CD8-positive, alpha-beta memory T cell (primary cell): ENCODE measurements at regions of chr17 and their contacts with region 1.

Region 1: GRCh38 chr17:63697341-63698286 is 2.3 kb downstream of the LIMD2 start:
- DNase-seq: peak; percentile 76 to 92 (median 84)
- H3K4me3 ChIP-seq: peak overlapping the region; percentile 95
- H3K4me3 Mint-ChIP-seq: peak overlapping the region; percentile 98 to 100 (median 98)
- H3K27ac ChIP-seq: peak overlapping the region; percentile 74
- H3K27ac Mint-ChIP-seq: peak overlapping the region; percentile 94 to 99 (median 98)
- H3K4me1 ChIP-seq: peaks cover 50% of the 10 kb centered on the region
- H3K4me1 Mint-ChIP-seq: peaks cover 61 to 71% (median 62%) of the 10 kb centered on the region in 3 donors
- H3K27me3 ChIP-seq: no peaks in the 10 kb centered on the region
- H3K27me3 Mint-ChIP-seq: peaks cover 0 to 3% of the 10 kb centered on the region in 2 donors

Region 2: GRCh38 chr17:63621766-63622519 is 75.7 kb before region 1 on chr17 and contains the start of gene MAP3K3:
- CTCF ChIA-PET with region 1: interaction called, 4 read pairs
- POLR2A ChIA-PET with region 1: interaction called, 20 read pairs
- DNase-seq: peak; percentile 94 to 98 (median 97)
- H3K4me3 ChIP-seq: peak within 1 kb of the TSS; percentile 70
- H3K4me3 Mint-ChIP-seq: peak within 1 kb of the TSS; percentile 95 to 99 (median 98)
- H3K27ac ChIP-seq: peak within 1 kb of the TSS; percentile 55
- H3K27ac Mint-ChIP-seq: peak within 1 kb of the TSS; percentile 71 to 95 (median 91)
- H3K4me1 ChIP-seq: peaks cover 36% of the 10 kb centered on the region
- H3K4me1 Mint-ChIP-seq: peaks cover 44 to 47% (median 46%) of the 10 kb centered on the region in 3 donors
- H3K27me3 ChIP-seq: no peaks in the 10 kb centered on the region
- H3K27me3 Mint-ChIP-seq: peaks cover 0 to 1% of the 10 kb centered on the region in 2 donors
- total RNA-seq, gene MAP3K3: 34.7 to 35.8 TPM

Region 3: DNA sequence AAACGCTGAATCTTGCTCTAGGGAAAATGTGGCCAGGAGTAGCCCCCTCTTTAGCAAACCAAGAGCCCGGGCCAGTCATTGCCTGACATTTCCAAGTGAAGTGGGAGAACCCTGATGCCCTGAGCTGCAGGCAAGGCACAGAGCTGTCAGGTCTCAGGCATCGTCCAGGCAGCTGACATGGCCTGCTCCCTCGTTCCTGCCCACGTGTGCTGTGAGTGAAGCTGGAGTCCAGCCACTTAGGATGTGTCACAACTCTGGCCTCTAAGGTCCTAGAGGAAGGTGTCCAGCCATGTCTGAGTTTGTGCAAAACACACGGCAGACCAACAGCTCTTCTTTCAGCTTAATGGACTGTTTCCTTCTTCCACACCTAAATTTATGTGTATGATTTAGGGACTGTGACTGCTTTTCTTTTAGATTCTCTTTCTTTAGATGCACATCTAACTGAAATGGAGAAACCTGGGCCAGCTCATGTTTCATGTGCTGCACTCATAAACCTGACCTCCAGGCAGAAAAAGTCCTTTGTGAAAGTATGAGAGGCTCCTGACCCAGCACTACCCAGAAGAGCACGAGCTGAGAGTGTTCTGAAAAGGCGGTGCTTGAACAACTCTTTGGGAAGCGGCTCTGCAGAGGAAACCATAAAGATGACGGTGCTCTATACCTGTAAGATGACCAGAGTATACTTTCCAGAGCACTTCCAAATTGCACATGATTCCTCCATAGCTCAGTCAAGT is 17.1 kb after region 1 on chr17:
- CTCF ChIA-PET with region 1: interaction called, 251 read pairs
- POLR2A ChIA-PET with region 1: interaction called, 270 read pairs
- DNase-seq: no peak
- H3K4me3 ChIP-seq: no peak overlapping the region
- H3K4me3 Mint-ChIP-seq: no peak overlapping the region
- H3K27ac ChIP-seq: no peak overlapping the region
- H3K27ac Mint-ChIP-seq: no peak overlapping the region
- H3K4me1 ChIP-seq: peaks cover 12% of the 10 kb centered on the region
- H3K4me1 Mint-ChIP-seq: peaks cover 7 to 12% (median 9%) of the 10 kb centered on the region in 3 donors
- H3K27me3 ChIP-seq: no peaks in the 10 kb centered on the region
- H3K27me3 Mint-ChIP-seq: no peaks in the 10 kb centered on the region

Region 4: GRCh38 chr17:63741221-63742049 is 43.8 kb after region 1 on chr17 and contains the start of gene STRADA:
- CTCF ChIA-PET with region 1: interaction called, 9 read pairs
- POLR2A ChIA-PET with region 1: interaction called, 16 read pairs
- DNase-seq: peak; percentile 98 to 99 (median 98)
- H3K4me3 ChIP-seq: peak within 1 kb of the TSS; percentile 86
- H3K4me3 Mint-ChIP-seq: peak within 1 kb of the TSS; percentile 86 to 96 (median 90)
- H3K27ac ChIP-seq: peak within 1 kb of the TSS; percentile 92
- H3K27ac Mint-ChIP-seq: peak within 1 kb of the TSS; percentile 93 to 98 (median 94)
- H3K4me1 ChIP-seq: peaks cover 13% of the 10 kb centered on the region
- H3K4me1 Mint-ChIP-seq: peaks cover 17 to 25% (median 21%) of the 10 kb centered on the region in 3 donors
- H3K27me3 ChIP-seq: no peaks in the 10 kb centered on the region
- H3K27me3 Mint-ChIP-seq: peaks cover 0 to 2% of the 10 kb centered on the region in 2 donors
- total RNA-seq, gene STRADA: 56.7 to 57.2 TPM

Region 5: DNA sequence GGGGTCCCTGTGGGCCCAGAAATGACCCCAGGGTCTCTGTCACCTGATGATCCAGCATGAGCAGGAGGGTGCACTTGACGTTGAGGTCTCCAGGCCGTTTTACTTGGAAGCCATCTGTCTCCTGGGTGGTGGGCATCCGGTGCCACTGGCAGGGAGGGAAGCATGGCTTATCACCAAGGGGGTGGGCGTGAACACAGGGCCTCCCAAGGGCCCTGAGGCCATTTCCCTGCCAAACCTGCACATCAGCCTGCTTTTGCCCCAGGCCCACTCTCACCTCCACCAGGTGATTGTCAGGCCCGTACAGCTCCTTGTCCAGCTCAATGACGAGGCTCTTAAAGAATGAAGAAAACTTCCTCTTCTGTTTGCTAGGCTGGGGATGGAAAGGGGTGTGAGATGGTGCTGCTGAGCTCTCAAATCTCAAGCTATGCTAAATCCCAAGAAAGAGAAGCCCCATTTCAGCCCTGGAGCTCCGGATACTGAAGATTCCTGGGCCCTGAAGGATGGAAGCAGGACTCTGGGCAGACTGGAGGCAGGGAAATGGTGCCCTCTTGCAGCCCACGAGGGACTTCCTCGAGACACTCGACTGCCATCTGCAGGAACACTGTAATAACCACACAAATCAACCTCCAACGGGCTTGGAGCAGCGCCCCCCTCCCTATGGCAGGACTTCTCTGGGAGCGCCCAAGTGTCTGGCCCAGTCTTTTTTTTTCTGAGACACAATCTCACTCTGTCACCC is 137.0 kb after region 1 on chr17:
- CTCF ChIA-PET with region 1: interaction called, 19 read pairs
- POLR2A ChIA-PET with region 1: interaction called, 6 read pairs
- DNase-seq: peak in 4 of 5 donors; percentile 45 to 70 (median 62)
- H3K4me3 ChIP-seq: no peak overlapping the region
- H3K4me3 Mint-ChIP-seq: peak overlapping the region in 1 of 7 donors; percentile 62
- H3K27ac ChIP-seq: no peak overlapping the region
- H3K27ac Mint-ChIP-seq: peak overlapping the region; percentile 63 to 89 (median 81)
- H3K4me1 ChIP-seq: peaks cover 56% of the 10 kb centered on the region
- H3K4me1 Mint-ChIP-seq: peaks cover 53 to 63% (median 58%) of the 10 kb centered on the region in 3 donors
- H3K27me3 ChIP-seq: no peaks in the 10 kb centered on the region
- H3K27me3 Mint-ChIP-seq: peaks cover 0 to 1% of the 10 kb centered on the region in 2 donors

Region 6: DNA sequence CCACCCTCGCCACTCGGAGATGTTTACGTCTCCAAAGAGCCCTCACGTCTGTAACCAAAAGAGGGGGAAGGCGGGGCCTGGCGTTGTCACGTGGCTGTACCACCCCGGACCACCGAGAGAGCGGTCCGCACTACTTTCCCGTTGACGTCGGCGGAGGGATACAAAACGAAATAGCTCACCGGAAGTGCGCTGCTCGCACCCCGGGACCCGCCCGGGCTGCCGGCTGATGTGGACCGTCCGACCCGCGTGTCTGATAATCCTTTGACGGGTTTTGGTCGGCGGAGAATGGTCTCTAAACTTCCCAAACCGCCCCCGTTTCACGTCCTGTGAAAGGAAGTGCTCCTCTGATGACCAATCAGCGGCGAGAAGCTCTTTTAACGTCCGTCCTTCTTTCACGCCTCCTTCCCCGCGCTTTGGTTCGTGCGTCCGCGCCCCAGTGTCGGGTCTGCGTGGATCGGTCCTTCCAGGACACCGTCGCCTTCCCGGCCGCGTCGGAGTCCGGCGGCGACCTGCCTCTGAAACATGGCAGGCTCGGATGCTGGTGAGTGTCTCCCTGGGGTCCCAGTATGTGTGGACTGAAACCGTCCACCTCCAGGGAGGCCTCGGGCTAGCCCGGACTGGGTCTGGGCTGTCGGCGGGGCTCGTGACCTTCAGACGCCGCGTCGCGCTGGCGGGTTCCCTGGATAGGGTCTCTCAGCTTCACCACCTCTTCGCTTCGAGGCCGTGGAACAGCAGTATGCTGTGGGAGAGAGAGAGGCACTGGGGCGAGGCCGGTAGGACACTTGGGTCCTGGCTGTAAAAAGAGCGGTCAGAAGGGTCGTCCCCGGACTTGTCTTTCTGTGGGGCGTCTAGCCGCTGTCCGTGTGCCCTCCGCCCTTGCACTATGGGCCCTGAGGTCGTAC is 809.2 kb after region 1 on chr17 and contains the start of gene CEP95:
- CTCF ChIA-PET with region 1: no interaction called
- POLR2A ChIA-PET with region 1: interaction called, 10 read pairs
- DNase-seq: peak; percentile 93 to 99 (median 97)
- H3K4me3 ChIP-seq: peak within 1 kb of the TSS; percentile 91
- H3K4me3 Mint-ChIP-seq: peak within 1 kb of the TSS; percentile 96 to 100 (median 99)
- H3K27ac ChIP-seq: peak within 1 kb of the TSS; percentile 98
- H3K27ac Mint-ChIP-seq: peak within 1 kb of the TSS; percentile 99 to 100 (median 99)
- H3K4me1 ChIP-seq: peaks cover 48% of the 10 kb centered on the region
- H3K4me1 Mint-ChIP-seq: peaks cover 52 to 77% (median 70%) of the 10 kb centered on the region in 3 donors
- H3K27me3 ChIP-seq: no peaks in the 10 kb centered on the region
- H3K27me3 Mint-ChIP-seq: peaks cover 0 to 24% of the 10 kb centered on the region in 2 donors
- total RNA-seq, gene CEP95: 39.3 to 43.5 TPM